ENCODE measurements at regions of chr9 and their contacts with region 1.

Region 1: DNA sequence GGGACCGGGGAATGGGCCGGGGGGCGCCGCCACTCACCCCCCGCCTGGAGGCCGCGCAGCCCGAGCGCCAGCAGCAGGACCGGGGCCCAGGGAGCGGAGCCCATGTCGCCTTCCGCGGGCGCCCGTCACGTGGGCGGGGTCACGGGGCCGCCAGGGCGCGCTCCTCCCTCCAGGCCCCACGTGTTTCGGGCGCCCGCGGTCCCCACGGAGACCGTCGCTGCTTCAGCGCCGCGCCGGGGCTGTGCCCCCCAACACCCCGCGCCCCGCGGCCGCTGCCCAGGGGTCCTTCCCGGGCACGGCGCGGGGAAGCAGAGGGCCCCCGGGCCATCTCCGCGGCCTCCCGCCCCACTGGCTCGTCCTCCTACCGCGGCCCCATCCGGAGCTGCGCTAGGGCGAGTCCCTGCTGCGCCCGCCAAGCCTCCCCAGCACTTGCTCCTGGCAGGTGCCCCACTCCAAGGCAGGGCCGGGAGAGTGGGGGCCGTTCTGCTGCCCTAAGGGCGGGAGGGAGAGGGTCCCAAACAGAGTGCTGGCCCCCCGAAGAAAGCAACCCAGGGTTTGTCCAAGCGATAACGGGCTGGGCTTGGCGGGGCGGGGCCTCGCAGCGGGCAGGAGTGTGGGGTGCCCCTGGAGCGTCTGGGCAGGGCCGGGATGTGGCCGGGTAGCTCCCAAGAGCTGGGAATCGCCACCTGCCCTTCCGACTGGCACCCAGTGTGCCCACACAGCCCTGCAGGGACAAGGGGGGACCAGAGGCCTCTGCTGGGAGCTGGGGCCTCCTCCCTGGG is at the start of gene DPP7:
- DNase-seq: peak; percentile 69
- H3K4me3 ChIP-seq: peak within 1 kb of the TSS; percentile 50 to 67
- H3K27ac ChIP-seq: peak within 1 kb of the TSS in 1 of 2 donors; percentile 47
- H3K4me1 ChIP-seq: no peaks in the 10 kb centered on the region
- H3K27me3 ChIP-seq: no peaks in the 10 kb centered on the region
- CTCF ChIP-seq: peak in 1 of 4 experiments; percentile 19
- POLR2A ChIP-seq: peak; percentile 44
- total RNA-seq, gene DPP7: 147 to 235 TPM

Region 2: DNA sequence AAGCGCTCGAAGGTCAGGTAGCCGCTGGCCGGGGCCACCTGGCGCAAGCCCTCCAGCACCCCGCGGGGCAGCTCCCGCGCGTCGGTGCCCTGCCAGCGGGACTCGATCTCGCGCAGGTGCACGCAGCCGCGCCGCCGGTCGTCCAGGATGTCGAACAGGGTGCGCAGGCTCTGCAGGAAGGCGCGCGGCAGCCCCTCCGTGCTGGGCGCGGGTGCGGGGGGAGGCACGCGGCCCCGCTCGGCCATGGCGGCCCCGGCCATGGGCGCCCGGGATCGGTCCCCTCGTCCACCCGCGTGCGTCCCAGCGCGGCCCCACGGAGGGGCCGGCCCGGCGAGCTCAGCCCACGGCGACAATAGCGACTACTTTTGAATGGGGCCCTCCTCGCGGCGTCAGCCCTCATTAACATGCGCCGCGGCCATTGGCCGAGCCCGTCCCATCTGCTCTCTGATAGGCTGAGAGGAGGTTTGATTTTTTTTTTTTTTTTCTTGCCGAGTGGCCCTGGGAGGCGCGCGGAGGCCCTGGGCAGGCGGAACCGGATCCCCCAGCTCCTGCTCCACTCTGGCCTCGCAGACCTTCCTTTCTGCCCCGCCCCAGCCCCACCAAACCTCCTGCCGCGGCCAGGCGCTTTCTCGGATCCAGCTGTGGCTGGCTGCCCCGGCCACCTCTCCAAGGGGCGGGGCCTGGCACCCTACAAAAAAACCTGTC is 44.4 kb before region 1 on chr9 and contains the start of gene SAPCD2:
- intact Hi-C with region 1: no loop called
- DNase-seq: peak; percentile 85
- H3K4me3 ChIP-seq: peak within 1 kb of the TSS; percentile 34 to 41
- H3K27ac ChIP-seq: peak within 1 kb of the TSS; percentile 78 to 87
- H3K4me1 ChIP-seq: peaks cover 3% of the 10 kb centered on the region
- H3K27me3 ChIP-seq: no peaks in the 10 kb centered on the region
- CTCF ChIP-seq: no peak
- POLR2A ChIP-seq: peak; percentile 18
- total RNA-seq, gene SAPCD2: 7.2 to 17.2 TPM

Region 3: DNA sequence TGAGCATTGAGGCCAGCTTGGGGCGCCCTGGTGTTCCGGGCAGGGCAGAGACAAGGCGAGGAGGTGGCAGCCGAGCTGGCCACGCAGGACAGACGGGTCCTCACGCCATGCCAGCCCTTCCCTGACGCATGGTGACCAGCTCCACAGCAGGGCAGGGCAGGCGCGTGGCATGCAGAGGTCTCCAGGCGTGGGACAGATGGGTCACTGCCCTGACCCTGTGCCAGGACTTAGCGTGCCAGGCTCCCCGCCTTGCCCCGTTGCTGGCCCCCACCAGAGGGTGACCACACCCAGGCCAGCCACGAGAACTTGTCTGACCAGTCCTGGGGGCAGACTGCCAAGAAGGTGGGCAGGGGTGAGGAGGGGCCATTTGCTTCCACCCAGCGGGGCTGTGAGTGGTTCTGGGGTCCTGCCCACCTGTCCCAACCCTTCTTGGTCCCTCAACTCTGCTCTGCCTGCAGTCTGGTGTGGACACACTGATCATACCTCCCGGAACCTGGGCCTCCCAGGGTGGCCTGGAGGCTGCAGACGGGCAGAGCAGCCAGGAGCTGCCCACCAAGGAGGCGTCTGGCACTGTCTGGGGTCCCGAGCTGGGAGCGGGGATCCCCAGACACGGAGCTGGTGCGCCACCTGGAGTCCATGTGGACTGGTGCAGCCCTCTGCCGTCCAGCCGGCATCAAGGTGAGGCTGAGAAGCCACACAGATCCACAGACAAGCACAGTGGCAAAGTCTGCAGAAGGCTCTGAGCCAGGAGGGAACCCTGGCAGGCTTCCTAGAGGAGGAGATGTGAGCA is 112.5 kb after region 1 on chr9 and contains the start of gene RNF224:
- intact Hi-C with region 1: loop called (anchors 5 kb)
- DNase-seq: peak; percentile 79
- H3K4me3 ChIP-seq: no peak within 1 kb of the TSS
- H3K27ac ChIP-seq: peak within 1 kb of the TSS; percentile 66 to 79
- H3K4me1 ChIP-seq: peaks cover 4% of the 10 kb centered on the region
- H3K27me3 ChIP-seq: peaks cover 4% of the 10 kb centered on the region
- CTCF ChIP-seq: peak; percentile 57 to 98 (median 88)
- POLR2A ChIP-seq: no peak
- total RNA-seq, gene RNF224: not detected